ENCODE measurements at regions of chr20 and their contacts with region 1.

Region 1: DNA sequence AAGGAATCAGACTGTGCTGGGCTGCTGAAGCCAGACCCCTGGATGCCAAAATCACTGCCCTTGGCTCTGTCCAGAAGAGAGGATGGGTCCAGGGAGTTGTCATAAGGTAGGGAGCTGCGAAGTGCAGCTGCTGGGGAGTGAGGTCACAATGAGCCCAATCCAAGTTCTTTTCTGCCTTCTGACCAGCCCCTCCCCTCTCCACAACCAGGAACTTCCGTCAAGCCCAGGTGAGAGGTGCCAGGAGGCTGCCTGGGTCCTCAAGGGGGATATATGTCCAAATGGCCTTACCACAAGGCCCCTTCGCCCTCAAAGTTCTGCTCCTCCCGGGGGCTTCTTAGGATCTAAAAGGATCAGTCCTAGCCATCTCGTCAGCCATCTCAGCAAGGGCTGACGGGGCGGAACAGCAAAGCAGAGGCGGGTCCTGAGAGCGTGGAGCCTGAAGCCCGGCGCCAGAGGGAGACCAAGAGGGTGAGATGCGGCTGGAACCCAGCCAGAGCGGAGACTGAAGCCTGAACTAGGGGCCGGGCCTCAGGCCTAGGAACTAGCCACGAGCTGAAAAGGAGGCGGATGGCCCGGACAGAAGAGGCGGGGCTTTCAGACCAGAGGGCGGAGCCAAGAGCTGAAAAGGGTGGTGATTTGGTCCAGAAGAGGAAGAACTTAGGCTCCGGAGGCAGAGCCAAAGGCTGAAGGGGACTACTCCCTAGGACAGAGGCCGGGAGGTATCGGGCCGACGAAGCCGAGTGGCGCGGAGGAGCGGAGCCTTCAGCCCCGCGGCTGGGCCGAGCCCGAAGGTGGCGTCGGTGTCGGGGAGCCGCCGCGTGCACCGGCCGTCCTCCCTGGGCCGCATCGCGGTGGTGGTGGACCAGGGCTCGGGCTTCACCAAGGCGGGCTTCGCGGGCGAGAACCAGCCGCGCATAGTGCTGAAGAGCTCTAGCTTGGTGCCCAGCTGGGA is at the start of gene ACTL10:
- DNase-seq: peak; percentile 99
- ATAC-seq: peak; percentile 90
- total RNA-seq, gene ACTL10: 0.71 TPM

Region 2: DNA sequence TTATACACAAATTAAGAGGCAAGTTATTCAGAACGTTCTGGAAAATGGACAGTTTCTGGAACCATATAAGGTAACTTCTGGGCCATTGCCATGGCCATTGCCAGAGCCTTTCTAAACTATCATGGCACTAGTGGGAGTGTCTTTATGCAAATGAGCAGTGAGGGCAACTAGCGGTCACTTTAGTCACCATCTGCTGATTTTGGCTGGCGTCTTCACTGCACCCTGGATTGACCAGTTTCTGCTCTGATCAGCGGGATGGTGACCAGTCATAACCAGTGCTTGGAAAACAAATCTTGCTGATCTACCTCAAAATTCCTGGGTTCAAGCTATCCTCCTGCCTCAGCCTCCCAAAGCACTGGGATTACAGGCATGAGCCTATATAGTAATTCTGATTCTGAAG is 215.7 kb before region 1 on chr20:
- intact Hi-C with region 1: loop called (anchors 10 kb)
- DNase-seq: no peak
- ATAC-seq: no peak

Region 3: DNA sequence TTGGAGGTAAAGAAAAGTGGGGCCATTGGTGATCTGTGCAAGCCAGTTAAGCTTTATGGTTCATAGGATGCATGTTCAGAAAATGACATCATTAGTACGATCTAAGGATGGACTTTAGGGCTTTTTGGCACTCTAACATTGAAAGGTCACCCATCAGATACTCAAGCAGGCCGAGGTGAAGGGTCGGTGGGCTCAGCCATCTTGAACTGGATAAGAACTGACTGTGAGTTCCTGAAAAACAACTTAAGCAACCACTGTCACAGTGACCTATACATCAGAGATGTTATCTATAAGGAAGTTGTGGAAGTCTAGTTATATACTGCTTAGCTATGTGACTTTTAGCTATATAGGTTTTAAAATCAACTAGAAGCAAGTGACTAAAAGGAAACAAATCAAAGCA is 683.5 kb after region 1 on chr20:
- intact Hi-C with region 1: no loop called
- DNase-seq: no peak
- ATAC-seq: no peak